ENCODE measurements at regions of chr16 and their contacts with region 1.

Region 1: GRCh38 chr16:28188085-28188916 is 23.5 kb downstream of the XPO6 start:
- DNase-seq: no peak
- ATAC-seq: no peak
- H3K4me3 Mint-ChIP-seq: peak overlapping the region; percentile 59
- H3K27ac Mint-ChIP-seq: peak overlapping the region; percentile 89
- H3K4me1 Mint-ChIP-seq: peaks cover 84% of the 10 kb centered on the region
- H3K27me3 Mint-ChIP-seq: no peaks in the 10 kb centered on the region

Region 2: DNA sequence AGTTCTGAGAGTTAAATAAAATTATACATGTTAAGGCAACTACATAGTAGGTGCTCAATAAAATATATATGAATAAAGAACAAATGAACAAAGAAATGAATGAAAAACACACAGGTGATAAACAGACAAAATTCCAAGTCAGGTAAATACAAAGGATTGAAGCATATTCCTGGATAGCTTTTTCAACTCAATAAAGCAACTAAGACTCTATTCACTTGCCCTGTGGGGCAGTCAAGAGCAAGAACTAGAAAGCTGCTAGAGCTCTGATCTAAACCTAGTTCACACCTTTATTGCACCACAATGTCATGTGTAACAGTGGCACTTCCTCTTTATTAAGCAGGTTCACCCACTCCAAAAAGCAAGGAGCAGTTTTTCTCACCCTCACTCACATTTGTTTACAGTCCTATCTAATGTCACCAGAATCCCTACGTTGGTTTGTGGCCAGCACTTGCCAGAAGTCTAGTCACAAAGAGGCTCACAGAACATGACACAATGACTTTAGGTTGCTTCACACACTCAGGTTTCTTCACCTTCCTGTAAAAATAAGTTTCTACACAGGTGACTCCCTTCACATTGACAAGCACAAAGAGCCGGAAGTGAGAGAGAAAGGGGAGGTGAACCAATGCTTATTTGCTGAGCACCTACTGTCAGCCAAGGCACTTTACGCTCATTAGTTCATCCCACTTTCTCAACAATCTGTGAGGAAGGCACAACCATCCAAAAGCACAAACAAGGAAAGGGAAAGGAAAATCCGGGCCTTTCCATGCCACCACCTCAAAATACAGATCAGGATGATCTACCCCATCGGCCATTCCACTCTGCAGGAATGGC is 47.3 kb before region 1 on chr16:
- POLR2A ChIA-PET with region 1: interaction called, 19 read pairs
- DNase-seq: peak; percentile 49
- ATAC-seq: peak; percentile 76
- H3K4me3 Mint-ChIP-seq: peak overlapping the region; percentile 84
- H3K27ac Mint-ChIP-seq: peak overlapping the region; percentile 99
- H3K4me1 Mint-ChIP-seq: peaks cover 75% of the 10 kb centered on the region
- H3K27me3 Mint-ChIP-seq: no peaks in the 10 kb centered on the region

Region 3: DNA sequence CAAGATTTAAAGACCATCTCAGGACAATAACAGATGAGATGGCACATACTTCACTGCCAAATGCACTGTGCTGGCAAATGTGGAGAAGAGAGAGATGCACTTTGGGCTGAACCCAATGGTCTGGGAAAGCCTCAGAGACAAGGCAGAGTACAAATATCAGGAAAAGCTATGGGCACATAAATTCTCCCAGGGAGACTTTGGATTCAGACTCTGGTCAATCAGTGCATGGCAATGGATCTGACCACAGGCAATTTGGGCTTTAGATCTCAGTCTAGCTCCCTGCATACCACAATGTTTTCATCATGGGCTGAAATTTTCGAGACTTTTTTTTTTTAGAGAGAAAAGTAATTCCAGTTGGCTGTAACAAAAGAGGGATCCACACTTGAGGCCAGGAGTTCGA is 43.5 kb after region 1 on chr16:
- POLR2A ChIA-PET with region 1: no interaction called
- DNase-seq: no peak
- ATAC-seq: no peak
- H3K4me3 Mint-ChIP-seq: no peak overlapping the region
- H3K27ac Mint-ChIP-seq: no peak overlapping the region
- H3K4me1 Mint-ChIP-seq: no peaks in the 10 kb centered on the region
- H3K27me3 Mint-ChIP-seq: peaks cover 8% of the 10 kb centered on the region

Region 4: DNA sequence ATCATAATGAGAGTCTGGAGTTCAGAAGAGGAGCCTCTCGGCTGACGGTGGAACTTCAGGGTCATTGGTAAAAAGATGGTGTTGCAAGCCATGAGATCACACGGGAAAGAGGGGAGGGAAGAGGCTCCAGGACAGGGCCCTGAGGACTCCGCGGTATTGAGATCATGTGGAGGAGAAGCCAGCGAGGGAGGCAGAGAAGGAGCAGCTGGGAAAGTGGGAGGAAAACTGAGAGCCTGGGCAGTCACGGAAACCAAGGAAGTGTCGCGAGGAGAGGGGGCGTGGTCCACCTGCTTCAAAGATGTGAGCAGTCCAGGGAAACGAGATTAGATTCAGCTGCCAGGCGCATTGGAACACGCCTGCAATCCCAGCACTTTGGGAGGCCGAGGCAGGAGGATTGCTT is 76.4 kb after region 1 on chr16:
- POLR2A ChIA-PET with region 1: no interaction called
- DNase-seq: no peak
- ATAC-seq: no peak
- H3K4me3 Mint-ChIP-seq: no peak overlapping the region
- H3K27ac Mint-ChIP-seq: no peak overlapping the region
- H3K4me1 Mint-ChIP-seq: peaks cover 8% of the 10 kb centered on the region
- H3K27me3 Mint-ChIP-seq: peaks cover 16% of the 10 kb centered on the region